ENCODE measurements at regions of chr11 and their contacts with region 1.

Region 1: DNA sequence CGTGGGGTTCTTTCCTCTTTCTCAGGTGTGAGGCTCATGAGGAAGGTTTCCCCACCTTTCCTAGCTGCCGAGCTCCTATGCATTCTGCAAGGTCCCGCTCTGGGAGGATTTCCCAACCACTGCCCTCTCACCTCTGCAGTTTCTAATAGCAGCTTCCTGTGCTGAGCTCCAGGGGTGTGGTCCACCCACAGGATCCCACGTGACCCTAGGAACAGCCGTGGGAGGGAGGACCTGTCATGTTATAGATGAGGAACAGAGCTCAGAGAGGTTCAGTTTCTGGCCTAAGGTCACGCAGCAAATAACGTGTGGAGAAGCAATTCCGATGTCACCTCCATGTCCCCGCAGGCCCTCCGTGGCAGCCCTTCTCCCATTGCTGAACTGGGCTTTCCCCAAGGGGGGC is 38.5 kb downstream of the FLRT1 start:
- DNase-seq: no peak
- ATAC-seq: no peak
- H3K4me3 ChIP-seq: no peak overlapping the region
- H3K27ac ChIP-seq: no peak overlapping the region
- H3K4me1 ChIP-seq: no peaks in the 10 kb centered on the region
- H3K27me3 ChIP-seq: no peaks in the 10 kb centered on the region
- CTCF ChIP-seq: no peak

Region 2: DNA sequence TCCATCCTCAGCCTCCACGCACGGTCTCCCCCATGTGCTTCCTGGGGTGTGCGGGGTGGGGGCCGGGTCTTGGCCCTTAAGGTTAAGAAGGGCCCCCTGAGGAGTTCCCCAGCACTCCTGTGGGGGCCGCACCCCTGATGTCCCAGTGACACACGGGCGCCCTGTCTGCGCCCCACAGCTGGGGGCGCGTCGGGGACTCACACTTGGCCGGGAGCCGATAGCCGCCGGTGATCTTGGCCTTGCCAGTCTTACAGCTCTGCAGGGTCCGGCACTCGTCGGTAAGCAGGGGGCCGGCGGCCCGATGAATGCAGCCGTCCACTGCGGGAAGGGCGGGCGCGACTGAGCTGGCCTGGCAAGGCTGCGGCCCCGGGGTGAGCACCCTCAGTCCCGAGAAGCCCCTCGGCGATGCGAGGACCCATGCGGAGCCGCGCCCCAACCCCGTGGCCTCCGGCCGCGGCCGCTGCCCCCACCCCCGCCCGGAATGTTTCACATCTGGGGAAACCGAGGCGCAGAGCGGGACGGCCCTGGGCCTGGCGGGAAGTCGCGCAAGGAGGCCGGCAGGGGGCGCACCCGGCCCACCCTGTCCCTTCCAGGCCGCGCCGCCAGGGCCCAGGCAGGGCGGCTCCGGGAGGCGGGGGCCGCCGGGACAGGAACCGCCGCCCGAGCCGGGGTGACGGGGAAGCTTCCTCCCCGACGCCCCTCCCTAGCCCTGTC is 74.1 kb before region 1 on chr11:
- CTCF ChIA-PET with region 1: no interaction called
- POLR2A ChIA-PET with region 1: no interaction called
- in situ Hi-C with region 1: loop called (anchors 10 kb)
- intact Hi-C with region 1: no loop called
- DNase-seq: no peak
- ATAC-seq: no peak
- H3K4me3 ChIP-seq: no peak overlapping the region
- H3K27ac ChIP-seq: no peak overlapping the region
- H3K4me1 ChIP-seq: peaks cover 50% of the 10 kb centered on the region
- H3K27me3 ChIP-seq: no peaks in the 10 kb centered on the region
- CTCF ChIP-seq: peak; percentile 73

Region 3: GRCh38 chr11:64196626-64197025 is 122.4 kb after region 1 on chr11:
- CTCF ChIA-PET with region 1: no interaction called
- POLR2A ChIA-PET with region 1: no interaction called
- in situ Hi-C with region 1: no loop called
- intact Hi-C with region 1: no loop called
- DNase-seq: no peak
- ATAC-seq: no peak
- H3K4me3 ChIP-seq: no peak overlapping the region
- H3K27ac ChIP-seq: no peak overlapping the region
- H3K4me1 ChIP-seq: no peaks in the 10 kb centered on the region
- H3K27me3 ChIP-seq: no peaks in the 10 kb centered on the region
- CTCF ChIP-seq: no peak

Region 4: DNA sequence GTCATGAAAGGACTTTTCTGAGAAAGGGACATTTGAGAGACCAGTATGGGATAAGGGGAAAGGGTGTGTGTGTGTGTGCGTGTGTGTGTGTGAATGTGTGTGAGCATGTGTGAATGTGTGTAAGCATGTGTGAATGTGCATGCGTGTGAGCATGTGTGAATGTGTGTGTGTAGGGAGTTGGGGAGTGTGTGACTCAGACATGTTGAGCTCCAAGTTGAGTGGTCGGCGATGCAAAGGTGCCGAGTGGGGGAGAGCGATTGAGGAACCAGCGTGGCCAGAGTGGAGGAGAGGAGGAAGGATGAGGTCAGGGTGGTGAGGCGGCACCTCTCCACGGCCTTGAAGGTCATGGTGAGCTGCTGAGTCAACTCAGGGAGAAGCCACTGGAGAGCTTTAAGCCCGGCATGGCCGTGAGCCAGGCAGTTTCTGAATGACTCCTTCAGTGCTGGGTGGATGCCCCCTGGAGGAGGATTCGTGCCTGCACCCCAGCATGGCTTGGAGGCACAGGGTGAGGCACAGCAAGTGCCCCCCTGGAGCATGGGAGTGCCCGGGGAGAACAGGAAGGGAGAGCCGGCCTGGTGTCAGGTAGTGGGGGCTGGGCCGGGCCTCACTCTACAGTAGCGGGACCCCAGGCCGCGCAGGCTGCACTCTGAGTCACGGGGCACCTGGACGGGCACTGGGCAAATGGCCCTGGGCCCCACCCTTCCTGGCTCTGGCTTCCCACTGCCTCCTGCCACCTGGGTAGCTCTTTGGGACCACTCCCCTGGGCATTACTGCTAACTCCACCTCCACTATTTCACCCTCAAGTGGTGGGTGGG is 257.5 kb after region 1 on chr11:
- CTCF ChIA-PET with region 1: no interaction called
- POLR2A ChIA-PET with region 1: no interaction called
- in situ Hi-C with region 1: no loop called
- intact Hi-C with region 1: no loop called
- DNase-seq: peak; percentile 80
- ATAC-seq: peak; percentile 86
- H3K4me3 ChIP-seq: peak overlapping the region in 1 of 2 experiments; percentile 28; a peak in 2 of 4 replicates
- H3K27ac ChIP-seq: peak overlapping the region; percentile 61
- H3K4me1 ChIP-seq: peaks cover 26% of the 10 kb centered on the region
- H3K27me3 ChIP-seq: no peaks in the 10 kb centered on the region
- CTCF ChIP-seq: no peak; the same call in 1 of the 2 replicates